Activated CD4-positive, alpha-beta memory T cell treated with anti-CD3 and anti-CD28 coated beads, Interleukin-2, amount 10 ng/mL, durations not matched to agents 7 days and 5 days (primary cell): ENCODE measurements at regions of chr17 and their contacts with region 1.

Region 1: GRCh38 chr17:42132941-42133340 is 10.3 kb downstream of the HSPB9 start:
- DNase-seq: peak; percentile 39
- H3K4me3 Mint-ChIP-seq: no peak overlapping the region
- H3K27ac Mint-ChIP-seq: peak overlapping the region; percentile 69
- H3K4me1 Mint-ChIP-seq: peaks cover 58% of the 10 kb centered on the region
- H3K27me3 Mint-ChIP-seq: no peaks in the 10 kb centered on the region

Region 2: DNA sequence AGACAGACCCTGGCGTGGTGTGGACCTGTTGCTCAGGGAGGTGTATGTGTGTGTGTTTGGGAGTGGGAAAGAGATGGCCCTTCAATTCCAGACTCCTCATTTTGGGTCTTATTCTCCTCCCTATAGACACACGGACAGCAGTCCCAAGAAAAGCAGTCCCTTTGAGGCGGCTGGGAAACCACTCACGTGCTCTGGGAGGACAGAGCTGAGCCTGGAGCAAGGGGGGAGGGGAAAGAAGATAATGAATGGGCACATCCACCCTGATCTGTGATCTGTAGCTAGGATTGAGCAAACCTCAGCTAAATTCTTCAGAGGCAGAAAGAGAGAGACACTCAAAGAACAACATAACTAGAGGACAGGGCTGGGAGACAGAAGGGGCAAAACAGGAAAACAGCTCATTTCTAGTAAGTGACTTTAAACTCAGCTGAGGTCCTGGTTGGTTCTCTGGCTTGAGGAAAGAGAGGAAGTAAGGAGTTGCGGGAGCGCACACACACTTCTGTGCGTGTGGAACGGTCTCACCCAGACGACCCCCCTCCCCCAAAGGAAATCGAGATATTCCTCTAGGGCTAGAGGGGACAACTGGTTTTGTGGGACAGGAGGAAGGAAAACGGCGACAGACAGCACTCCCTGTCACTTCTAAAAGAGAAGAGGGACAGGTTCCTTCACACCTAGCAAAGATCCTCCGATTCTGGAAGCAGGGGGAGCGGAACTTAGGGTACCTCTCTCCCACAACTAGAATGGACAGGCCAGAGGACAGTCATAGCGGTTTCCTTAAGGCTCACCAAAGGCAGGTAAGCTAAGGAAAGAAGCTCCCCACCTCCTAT is 21.2 kb after region 1 on chr17:
- CTCF ChIA-PET with region 1: no interaction called
- POLR2A ChIA-PET with region 1: interaction called, 15 read pairs
- DNase-seq: no peak
- H3K4me3 Mint-ChIP-seq: peak overlapping the region; percentile 92
- H3K27ac Mint-ChIP-seq: peak overlapping the region; percentile 86
- H3K4me1 Mint-ChIP-seq: peaks cover 45% of the 10 kb centered on the region
- H3K27me3 Mint-ChIP-seq: no peaks in the 10 kb centered on the region